ENCODE measurements at regions of chr18 and their contacts with region 1.

Region 1: GRCh38 chr18:42053188-42053781 is 98.3 kb downstream of the PIK3C3 start:
- DNase-seq: peak in 1 of 2 experiments; percentile 33
- ATAC-seq: peak; percentile 73 to 75; a peak in 5 of 6 replicates
- H3K4me3 ChIP-seq: no peak overlapping the region
- H3K27ac ChIP-seq: no peak overlapping the region
- H3K4me1 ChIP-seq: peaks cover 8% of the 10 kb centered on the region; the same call in 2 of the 3 replicates
- CTCF ChIP-seq: peak; percentile 77
- EP300 ChIP-seq: no peak
- POLR2A ChIP-seq: no peak
- RAD21 ChIP-seq: peak; percentile 52 to 56

Region 2: DNA sequence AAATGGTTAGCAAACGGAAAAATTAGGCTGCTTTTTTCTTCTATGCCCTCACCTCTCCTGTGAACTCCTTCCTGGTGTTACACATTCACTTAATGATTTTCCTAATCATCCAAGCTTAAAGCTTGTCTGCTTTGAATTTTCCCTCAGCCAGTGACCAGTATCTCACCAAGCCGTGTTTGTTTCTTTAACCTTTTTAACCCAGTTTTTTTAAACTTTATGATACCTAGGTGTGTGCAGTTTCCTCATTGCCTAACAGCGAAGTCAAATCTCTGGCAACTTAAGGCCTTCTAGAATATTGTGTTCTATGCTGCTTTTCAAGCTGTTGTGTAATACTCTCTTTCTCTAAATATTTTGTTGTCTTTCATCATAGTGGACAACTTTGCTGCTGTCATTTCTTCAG is 14.7 kb after region 1 on chr18:
- CTCF ChIA-PET with region 1: interaction called, 10 read pairs
- POLR2A ChIA-PET with region 1: no interaction called
- DNase-seq: no peak
- ATAC-seq: no peak
- H3K4me3 ChIP-seq: no peak overlapping the region
- H3K27ac ChIP-seq: no peak overlapping the region
- H3K4me1 ChIP-seq: no peaks in the 10 kb centered on the region
- CTCF ChIP-seq: no peak
- EP300 ChIP-seq: no peak
- POLR2A ChIP-seq: no peak
- RAD21 ChIP-seq: no peak

Measured in A549 (cell line).